GM10248 (cell line): ENCODE measurements at regions of chr1 and their contacts with region 1.

Region 1: DNA sequence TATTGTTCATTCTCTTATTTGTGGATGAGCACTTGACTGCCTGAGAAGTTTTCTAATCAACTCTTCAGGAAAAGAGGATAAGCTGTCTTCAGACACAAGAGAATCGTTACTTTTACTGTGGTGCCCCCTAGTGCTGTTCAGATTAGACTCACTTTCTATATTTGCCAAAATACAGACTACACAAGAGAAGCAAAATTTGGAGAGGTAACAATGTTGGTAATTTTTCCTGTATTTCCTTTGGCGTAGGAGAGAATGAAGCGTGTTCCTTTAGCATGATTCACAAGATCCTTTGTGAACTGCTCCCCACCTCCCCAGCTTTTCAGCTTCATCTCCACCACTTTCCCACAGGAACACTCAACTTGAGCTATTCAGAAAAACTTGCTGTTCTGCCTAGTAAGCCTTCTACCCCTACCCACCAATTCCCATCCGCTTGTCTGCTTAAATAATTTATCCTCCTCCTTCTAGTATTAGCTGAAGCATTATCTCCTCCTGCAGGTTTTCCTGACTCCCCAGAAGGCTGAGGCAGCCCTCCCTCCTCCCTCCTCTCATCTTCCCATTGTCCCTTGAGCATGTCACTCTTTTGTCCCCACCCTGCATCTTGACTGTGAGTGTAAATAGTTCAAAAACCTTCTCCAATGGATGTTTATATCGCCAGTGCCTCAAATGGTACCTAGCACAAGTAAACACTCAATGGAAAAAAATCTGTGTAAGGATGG is 4.5 kb downstream of the TNFSF4 start:
- DNase-seq: no peak
- CTCF ChIP-seq: peak; percentile 55

Region 2: GRCh38 chr1:172826096-172826743 is 376.4 kb before region 1 on chr1:
- CTCF ChIA-PET with region 1: interaction called, 25 read pairs
- POLR2A ChIA-PET with region 1: no interaction called
- DNase-seq: no peak
- CTCF ChIP-seq: peak; percentile 45

Region 3: DNA sequence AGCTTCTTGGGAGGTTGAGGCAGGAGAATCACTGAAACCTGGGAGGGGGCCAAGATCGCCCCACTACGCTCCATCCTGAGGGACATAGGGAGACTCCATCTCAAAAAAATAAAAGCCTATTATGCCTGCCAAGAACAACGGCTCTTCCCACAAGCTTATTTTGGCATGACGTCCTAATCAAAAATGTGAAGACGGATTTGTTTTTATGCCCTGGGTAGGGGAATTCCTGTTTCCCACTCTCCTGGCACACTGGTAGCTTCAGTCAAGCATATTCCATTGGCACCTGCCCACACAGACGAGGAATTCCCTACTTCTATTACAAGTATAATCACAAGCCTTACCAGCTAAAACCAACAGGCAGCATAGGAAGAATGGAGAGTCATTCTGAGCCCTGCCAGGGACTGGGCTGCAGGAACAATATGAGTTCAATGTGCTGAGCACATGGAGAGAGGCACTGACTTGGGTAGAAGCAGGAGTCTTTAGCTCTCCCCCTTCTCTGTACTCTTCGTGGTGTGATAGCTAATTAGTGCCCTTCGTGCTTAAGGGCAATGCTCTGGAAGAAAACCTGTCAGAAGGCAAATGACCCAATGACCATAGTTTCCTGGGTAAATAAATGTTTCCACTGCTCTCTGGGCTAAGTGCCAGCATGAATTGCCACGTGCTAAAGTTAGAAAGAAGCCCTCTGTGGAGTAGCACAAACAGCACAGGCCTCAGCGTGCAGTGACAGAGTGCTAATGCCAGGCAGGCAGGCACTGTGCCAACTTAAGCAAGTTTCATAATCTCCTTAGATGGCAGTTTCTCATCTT is 12.3 kb before region 1 on chr1:
- CTCF ChIA-PET with region 1: interaction called, 11 read pairs
- POLR2A ChIA-PET with region 1: no interaction called
- DNase-seq: no peak
- CTCF ChIP-seq: no peak

Region 4: DNA sequence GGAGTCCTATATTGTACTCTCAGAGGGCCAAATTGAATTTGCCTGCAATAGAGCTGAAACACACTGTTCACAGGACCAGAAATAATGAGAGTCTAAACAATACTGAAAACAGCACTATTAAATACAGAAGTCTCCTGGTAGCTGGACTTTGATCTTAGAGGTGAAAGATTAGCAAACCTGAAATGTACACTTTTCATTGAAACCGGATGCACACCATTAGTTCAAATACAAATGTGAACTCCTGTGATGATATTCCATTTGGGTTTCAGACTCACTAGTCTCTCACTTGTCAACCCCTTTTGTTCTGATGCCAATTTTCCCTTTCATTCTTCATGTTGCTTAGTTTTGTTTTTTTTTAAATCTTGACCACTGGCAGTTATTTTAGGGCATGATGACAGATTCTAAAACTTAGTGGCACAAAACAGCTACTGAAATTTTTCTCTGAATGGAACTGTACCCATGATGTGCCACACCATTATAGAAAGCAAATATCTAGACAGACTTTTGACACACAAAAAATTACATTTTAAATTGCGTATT is 10.4 kb after region 1 on chr1:
- CTCF ChIA-PET with region 1: interaction called, 39 read pairs
- POLR2A ChIA-PET with region 1: no interaction called
- DNase-seq: peak; percentile 53
- CTCF ChIP-seq: no peak

Region 5: DNA sequence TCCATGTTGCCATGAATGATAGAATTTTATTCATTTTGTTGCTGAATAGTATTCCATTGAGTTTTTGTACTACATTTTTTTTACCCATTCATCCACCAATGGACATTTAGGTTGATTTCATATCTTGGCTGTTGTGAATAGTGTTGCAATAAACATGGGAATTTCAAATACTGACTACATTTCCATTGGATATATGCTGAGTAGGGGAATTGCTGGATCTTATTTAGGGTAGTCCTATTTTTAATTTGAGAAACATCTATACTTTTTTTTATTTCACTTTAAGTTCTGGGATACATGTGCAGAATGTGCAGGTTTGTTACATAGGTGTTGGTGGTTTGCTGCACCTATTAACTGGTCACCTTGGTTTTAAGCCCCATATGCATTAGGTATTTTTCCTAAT is 43.3 kb after region 1 on chr1:
- CTCF ChIA-PET with region 1: interaction called, 10 read pairs
- POLR2A ChIA-PET with region 1: no interaction called
- DNase-seq: no peak
- CTCF ChIP-seq: no peak